PC-3 (cell line): ENCODE measurements at regions of chr2 and their contacts with region 1.

Region 1: GRCh38 chr2:191677646-191678436 is at the start of gene NABP1:
- DNase-seq: peak; percentile 97
- ATAC-seq: peak; percentile 82
- H3K4me3 ChIP-seq: peak within 1 kb of the TSS; percentile 80
- H3K27ac ChIP-seq: peak within 1 kb of the TSS; percentile 93
- H3K4me1 ChIP-seq: peaks cover 23% of the 10 kb centered on the region
- H3K27me3 ChIP-seq: no peaks in the 10 kb centered on the region
- CTCF ChIP-seq: no peak
- total RNA-seq, gene NABP1: 45.4 and 56.8 TPM in 2 replicates

Region 2: DNA sequence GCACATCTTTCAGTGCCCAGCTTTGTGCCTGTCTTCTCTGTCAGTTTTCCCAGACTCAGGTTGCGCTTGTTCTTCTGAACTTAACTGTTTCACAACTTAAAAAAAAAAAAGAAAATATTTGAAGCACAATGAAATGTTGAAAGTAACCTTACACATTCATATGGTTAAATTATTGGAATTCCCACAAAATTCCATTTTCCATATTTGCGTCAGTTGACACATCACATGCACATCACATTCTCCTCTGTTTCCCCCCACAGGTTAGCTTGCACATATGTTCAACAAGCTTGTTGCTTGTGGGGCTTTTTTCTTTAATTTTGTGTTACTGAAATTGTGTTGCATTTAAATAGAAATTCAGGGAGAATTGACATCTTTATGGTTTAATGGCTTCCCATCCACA is 424.4 kb before region 1 on chr2:
- CTCF ChIA-PET with region 1: no interaction called
- POLR2A ChIA-PET with region 1: interaction called, 50 read pairs
- intact Hi-C with region 1: no loop called
- DNase-seq: no peak
- ATAC-seq: no peak
- H3K4me3 ChIP-seq: no peak overlapping the region
- H3K27ac ChIP-seq: no peak overlapping the region
- H3K4me1 ChIP-seq: peaks cover 32% of the 10 kb centered on the region
- H3K27me3 ChIP-seq: no peaks in the 10 kb centered on the region
- CTCF ChIP-seq: no peak

Region 3: GRCh38 chr2:191637182-191638078 is 40.4 kb before region 1 on chr2:
- CTCF ChIA-PET with region 1: no interaction called
- POLR2A ChIA-PET with region 1: interaction called, 52 read pairs
- intact Hi-C with region 1: loop called (anchors 1 kb)
- DNase-seq: peak; percentile 95
- ATAC-seq: peak; percentile 80
- H3K4me3 ChIP-seq: peak overlapping the region; percentile 60
- H3K27ac ChIP-seq: peak overlapping the region; percentile 99
- H3K4me1 ChIP-seq: peaks cover 64% of the 10 kb centered on the region
- H3K27me3 ChIP-seq: no peaks in the 10 kb centered on the region
- CTCF ChIP-seq: no peak

Region 4: DNA sequence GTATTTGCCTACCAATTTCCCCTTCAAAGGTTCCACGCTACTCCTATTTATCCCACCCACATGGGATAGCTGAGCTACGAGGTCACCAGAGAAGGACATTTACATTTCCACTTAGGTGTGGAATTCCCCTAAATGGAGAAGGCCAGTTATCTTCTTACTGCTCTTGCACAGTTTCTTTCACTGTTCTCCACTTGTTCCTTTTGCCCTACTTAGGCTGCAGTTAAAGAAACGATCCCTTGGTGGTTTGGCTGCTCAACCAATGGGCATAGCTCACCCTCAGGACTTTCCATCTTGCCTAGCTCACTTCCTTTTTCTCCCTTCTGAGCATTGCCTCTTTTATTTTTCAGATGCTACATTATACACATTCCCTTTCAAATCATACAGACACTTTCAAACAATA is 11.1 kb before region 1 on chr2:
- CTCF ChIA-PET with region 1: no interaction called
- POLR2A ChIA-PET with region 1: interaction called, 15 read pairs
- intact Hi-C with region 1: no loop called
- DNase-seq: peak; percentile 26
- ATAC-seq: peak; percentile 35; the same call in 1 of the 2 replicates
- H3K4me3 ChIP-seq: no peak overlapping the region
- H3K27ac ChIP-seq: no peak overlapping the region
- H3K4me1 ChIP-seq: peaks cover 26% of the 10 kb centered on the region
- H3K27me3 ChIP-seq: no peaks in the 10 kb centered on the region
- CTCF ChIP-seq: no peak

Region 5: DNA sequence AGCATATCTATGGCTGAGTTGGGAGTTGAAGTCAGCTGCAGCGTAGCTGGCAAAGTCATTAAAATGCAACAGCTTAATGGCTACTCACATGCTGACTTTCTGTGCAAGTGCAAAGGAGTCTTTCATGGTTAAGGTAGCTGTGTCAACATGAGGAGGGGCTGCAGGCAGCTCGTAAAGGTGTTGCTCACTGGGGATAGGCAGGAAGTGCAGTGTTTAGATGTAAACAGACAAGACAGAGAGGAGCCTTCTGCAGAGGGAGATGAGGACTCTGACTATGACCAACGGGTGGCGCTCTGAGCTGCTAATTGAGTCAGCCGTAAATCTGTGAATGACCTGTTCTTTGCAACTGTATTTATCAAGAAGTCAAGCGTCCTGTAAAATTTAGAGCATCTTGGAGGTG is 191.3 kb after region 1 on chr2:
- CTCF ChIA-PET with region 1: no interaction called
- POLR2A ChIA-PET with region 1: interaction called, 15 read pairs
- intact Hi-C with region 1: no loop called
- DNase-seq: peak; percentile 92
- ATAC-seq: peak; percentile 86
- H3K4me3 ChIP-seq: no peak overlapping the region
- H3K27ac ChIP-seq: peak overlapping the region; percentile 53
- H3K4me1 ChIP-seq: peaks cover 37% of the 10 kb centered on the region
- H3K27me3 ChIP-seq: no peaks in the 10 kb centered on the region
- CTCF ChIP-seq: peak; percentile 91